ENCODE measurements at regions of chr16 and their contacts with region 1.

Region 1: GRCh38 chr16:51151961-51152663 is 1.0 kb upstream of the SALL1 start:
- ATAC-seq: peak; percentile 71 to 78 (median 72)
- H3K4me3 ChIP-seq: peak overlapping the region; percentile 54 to 97 (median 82)
- H3K27ac ChIP-seq: peak overlapping the region; percentile 80 to 91
- H3K4me1 ChIP-seq: peaks cover 4 to 9% of the 10 kb centered on the region in 2 donors

Region 2: DNA sequence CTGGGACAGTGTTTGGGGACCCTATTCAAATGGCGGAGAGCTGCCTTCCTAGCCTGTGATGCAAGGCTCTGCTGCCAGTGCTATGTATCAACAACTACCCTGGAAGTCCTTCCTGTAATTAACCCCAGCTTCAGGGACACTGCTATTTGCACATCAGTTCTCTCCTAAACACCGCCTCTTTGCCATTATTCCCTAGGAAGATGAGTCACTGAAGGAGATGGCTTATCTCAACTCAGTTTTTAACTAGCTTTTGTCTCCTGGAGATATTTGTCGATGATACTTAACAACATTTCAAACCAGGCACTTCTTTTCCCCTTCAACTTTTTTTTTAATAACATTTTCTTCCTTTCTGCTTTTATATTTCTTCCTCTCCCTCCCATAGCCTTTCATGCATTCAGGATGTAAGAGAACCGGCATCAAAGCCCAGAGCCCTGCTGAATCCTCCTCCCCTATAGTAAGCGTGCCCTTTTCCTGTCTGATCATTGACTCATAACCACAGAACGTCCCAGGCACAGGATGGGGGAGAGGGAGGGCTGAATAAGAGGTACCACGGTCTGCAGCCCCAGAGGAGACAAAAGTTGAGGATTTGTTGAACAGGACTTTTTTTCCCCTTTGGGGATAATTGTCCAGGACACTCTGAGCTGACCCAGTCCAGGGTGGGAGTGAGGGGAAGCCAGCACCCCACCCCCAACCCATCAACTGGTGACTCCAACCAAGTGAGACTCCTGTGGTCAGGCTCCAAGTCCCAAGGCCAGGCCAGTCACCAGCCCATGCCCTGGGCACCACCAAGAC is 386.8 kb after region 1 on chr16:
- in situ Hi-C with region 1: loop called in 1 of 9 experiments (anchors 25 kb)
- ATAC-seq: peak; percentile 42 to 92 (median 70)
- H3K4me3 ChIP-seq: no peak overlapping the region
- H3K27ac ChIP-seq: peak overlapping the region; percentile 3 to 54
- H3K4me1 ChIP-seq: peaks cover 55 to 57% of the 10 kb centered on the region in 2 donors

Region 3: DNA sequence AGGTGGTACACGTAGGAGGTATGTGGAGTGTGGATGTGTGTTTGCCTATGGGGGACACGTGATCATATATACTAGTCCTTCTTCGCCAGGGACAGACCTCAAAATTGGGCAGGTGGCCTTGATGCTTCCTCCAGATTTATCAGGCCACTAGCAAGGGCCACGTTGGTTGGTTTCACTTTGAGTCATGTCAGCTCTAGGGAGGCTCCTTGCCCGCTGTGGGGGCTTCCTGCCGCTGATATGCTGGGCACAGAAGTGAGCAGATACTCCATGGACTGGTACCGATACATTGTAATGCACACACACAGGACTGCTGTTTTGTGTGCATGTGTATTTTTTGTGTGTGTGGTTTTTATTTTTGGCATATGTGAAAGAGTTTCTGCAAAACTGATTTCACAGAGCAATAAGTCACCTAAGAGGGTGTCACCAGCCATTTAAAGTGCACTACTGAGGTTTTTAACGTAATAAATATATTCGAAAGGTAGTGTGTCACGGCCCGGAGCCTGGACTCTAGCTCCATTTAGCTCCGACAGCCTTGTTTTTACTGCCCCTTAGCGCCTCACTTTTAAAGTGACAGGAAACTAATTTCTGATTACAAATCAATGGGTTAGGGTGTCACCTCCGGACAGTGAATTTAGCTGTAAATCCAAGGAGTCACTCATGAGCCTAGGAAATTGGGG is 604.5 kb after region 1 on chr16:
- in situ Hi-C with region 1: loop called in 6 of 9 experiments (anchors 10 to 25 kb)
- ATAC-seq: peak in 5 of 8 experiments; percentile 34 to 59 (median 37)
- H3K4me3 ChIP-seq: no peak overlapping the region
- H3K27ac ChIP-seq: no peak overlapping the region
- H3K4me1 ChIP-seq: peaks cover 78 to 90% of the 10 kb centered on the region in 2 donors

Region 4: DNA sequence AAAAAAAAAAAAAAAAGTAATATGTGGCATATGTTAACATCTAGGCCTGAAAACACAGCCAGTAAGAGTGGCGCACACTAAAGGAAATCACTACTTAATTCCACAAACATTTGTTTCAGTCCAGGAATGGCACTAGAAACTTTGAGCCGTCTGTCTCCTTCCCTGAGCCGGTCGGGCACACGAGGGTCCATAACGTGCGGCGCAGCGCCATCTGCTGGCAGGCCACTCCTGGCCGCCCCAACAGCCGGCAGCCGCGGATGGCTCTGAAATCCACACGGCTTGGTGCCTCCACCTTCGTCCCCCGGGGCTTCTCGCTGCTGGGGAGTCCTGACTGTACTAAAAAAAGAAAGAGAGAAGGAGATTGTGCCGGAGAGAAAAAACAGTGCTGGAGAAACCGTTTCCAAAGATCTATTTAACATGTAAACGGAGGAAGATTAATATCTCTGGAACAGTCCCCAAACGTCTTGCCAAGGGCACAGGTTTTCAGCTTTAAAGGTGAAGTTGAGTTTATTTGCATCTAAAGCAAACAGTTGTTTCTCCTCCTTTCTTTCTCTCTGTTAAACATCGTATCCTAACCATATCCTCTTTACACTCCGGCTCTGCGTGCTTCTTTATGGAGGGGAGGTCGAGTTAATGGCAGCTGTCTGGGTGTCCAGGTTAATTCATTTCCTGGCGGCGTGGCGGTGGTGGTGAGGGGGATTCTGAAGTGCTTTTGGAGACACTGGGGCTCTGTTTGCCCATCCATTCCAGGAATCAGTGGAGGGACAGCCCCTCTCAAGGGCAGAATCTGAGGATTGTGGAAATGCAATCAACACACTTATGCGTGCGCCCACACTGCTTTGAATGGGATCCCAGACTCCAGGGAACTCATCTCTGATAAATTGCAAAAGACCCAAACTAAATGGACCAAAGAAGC is 610.2 kb after region 1 on chr16:
- in situ Hi-C with region 1: loop called in 6 of 9 experiments (anchors 10 to 25 kb)
- ATAC-seq: peak; percentile 80 to 99 (median 88)
- H3K4me3 ChIP-seq: peak overlapping the region in 1 of 5 donors; percentile 15
- H3K27ac ChIP-seq: peak overlapping the region in 1 of 2 donors; percentile 59
- H3K4me1 ChIP-seq: peaks cover 64% of the 10 kb centered on the region in 2 donors

Region 5: GRCh38 chr16:51982715-51983680 is 830.9 kb after region 1 on chr16:
- in situ Hi-C with region 1: loop called in 1 of 9 experiments (anchors 25 kb)
- ATAC-seq: peak; percentile 6 to 73 (median 64)
- H3K4me3 ChIP-seq: no peak overlapping the region
- H3K27ac ChIP-seq: no peak overlapping the region
- H3K4me1 ChIP-seq: peaks cover 0 to 5% of the 10 kb centered on the region in 2 donors